CD14-positive monocyte (primary cell): ENCODE measurements at regions of chr1 and their contacts with region 1.

Region 1: GRCh38 chr1:3727042-3727824 is 25.0 kb upstream of the CCDC27 start:
- DNase-seq: no peak
- H3K4me3 ChIP-seq: no peak overlapping the region
- H3K4me3 Mint-ChIP-seq: no peak overlapping the region
- H3K27ac ChIP-seq: no peak overlapping the region
- H3K27ac Mint-ChIP-seq: peak overlapping the region in 1 of 7 donors; percentile 61
- H3K4me1 ChIP-seq: no peaks in the 10 kb centered on the region
- H3K4me1 Mint-ChIP-seq: no peaks in the 10 kb centered on the region
- H3K27me3 ChIP-seq: no peaks in the 10 kb centered on the region
- H3K27me3 Mint-ChIP-seq: peaks cover 2 to 11% (median 5%) of the 10 kb centered on the region in 3 donors
- CTCF ChIP-seq: no peak

Region 2: DNA sequence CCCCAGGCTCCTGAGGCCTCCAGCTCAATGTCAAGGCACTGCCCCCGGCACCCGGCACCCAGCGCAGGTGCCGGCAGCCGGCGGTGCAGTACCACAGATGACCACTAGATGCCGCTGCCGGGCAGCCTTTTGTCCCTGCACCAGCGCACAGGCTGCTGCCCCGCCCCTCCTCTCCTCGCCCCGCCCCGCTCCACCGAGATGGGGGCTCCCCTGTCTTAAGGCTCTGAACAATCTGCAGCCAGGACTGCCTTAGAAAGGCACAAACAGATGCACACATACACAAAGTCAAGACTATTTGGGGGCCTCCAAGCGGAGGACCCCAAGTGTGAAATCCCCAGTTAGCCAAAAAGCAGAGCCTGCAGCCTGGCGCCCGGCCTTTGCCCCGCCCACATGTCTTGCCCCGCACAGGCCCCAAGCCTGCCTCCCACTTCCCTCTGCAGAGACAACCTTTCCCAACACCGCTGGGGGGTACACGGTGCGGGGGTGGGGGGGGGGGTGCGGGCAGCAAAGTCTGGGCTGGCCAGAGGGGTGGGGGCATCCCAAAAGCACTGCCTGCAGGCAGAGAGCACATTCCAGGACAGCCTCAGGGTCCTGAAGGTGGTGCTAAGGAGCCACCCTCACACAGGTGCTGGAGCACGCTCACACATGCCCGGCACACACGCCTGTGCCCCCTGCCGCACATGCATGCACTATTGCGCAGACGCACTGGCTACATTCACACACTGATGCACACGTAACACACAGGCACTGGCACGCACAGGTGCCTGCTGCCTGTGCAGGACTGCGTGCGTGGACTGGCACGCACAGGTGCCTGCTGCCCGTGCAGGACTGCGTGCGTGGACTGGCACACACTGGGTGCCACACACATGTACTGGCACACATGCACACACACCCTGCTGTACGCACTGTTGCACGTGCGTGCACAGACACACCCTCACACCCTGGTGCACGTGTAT is 235.7 kb before region 1 on chr1:
- intact Hi-C with region 1: loop called in 1 of 2 experiments (anchors 10 kb)
- DNase-seq: peak; percentile 55 to 71 (median 65)
- H3K4me3 ChIP-seq: peak overlapping the region in 1 of 3 experiments; percentile 63
- H3K4me3 Mint-ChIP-seq: peak overlapping the region; percentile 65 to 71
- H3K27ac ChIP-seq: no peak overlapping the region
- H3K27ac Mint-ChIP-seq: no peak overlapping the region
- H3K4me1 ChIP-seq: peaks cover 0 to 6% of the 10 kb centered on the region in 2 donors
- H3K4me1 Mint-ChIP-seq: peaks cover 4% of the 10 kb centered on the region
- H3K27me3 ChIP-seq: no peaks in the 10 kb centered on the region
- H3K27me3 Mint-ChIP-seq: peaks cover 0 to 2% (median 0%) of the 10 kb centered on the region in 3 donors
- CTCF ChIP-seq: peak; percentile 100

Region 3: GRCh38 chr1:3564921-3565827 is 162.1 kb before region 1 on chr1:
- intact Hi-C with region 1: loop called in 1 of 2 experiments (anchors 10 kb)
- DNase-seq: peak in 2 of 3 donors; percentile 10 to 34
- H3K4me3 ChIP-seq: no peak overlapping the region
- H3K4me3 Mint-ChIP-seq: no peak overlapping the region
- H3K27ac ChIP-seq: no peak overlapping the region
- H3K27ac Mint-ChIP-seq: peak overlapping the region in 3 of 7 donors; percentile 30 to 55 (median 41)
- H3K4me1 ChIP-seq: no peaks in the 10 kb centered on the region
- H3K4me1 Mint-ChIP-seq: no peaks in the 10 kb centered on the region
- H3K27me3 ChIP-seq: no peaks in the 10 kb centered on the region
- H3K27me3 Mint-ChIP-seq: peaks cover 0 to 2% (median 0%) of the 10 kb centered on the region in 3 donors
- CTCF ChIP-seq: peak; percentile 96